AG04450 (cell line): ENCODE measurements at regions of chr3 and their contacts with region 1.

Region 1: GRCh38 chr3:97719156-97719821 is 45.3 kb upstream of the ARL6 start:
- DNase-seq: peak; percentile 34
- H3K4me3 ChIP-seq: no peak overlapping the region; the same call in 1 of the 2 replicates
- H3K27ac ChIP-seq: no peak overlapping the region
- H3K27me3 ChIP-seq: no peaks in the 10 kb centered on the region
- CTCF ChIP-seq: peak; percentile 98

Region 2: GRCh38 chr3:97647441-97647982 is 71.8 kb before region 1 on chr3:
- CTCF ChIA-PET with region 1: no interaction called
- POLR2A ChIA-PET with region 1: no interaction called
- DNase-seq: no peak
- H3K4me3 ChIP-seq: no peak overlapping the region
- H3K27ac ChIP-seq: no peak overlapping the region
- H3K27me3 ChIP-seq: no peaks in the 10 kb centered on the region
- CTCF ChIP-seq: no peak

Region 3: GRCh38 chr3:97662762-97663161 is 56.5 kb before region 1 on chr3:
- CTCF ChIA-PET with region 1: no interaction called
- POLR2A ChIA-PET with region 1: no interaction called
- DNase-seq: no peak
- H3K4me3 ChIP-seq: no peak overlapping the region
- H3K27ac ChIP-seq: no peak overlapping the region
- H3K27me3 ChIP-seq: no peaks in the 10 kb centered on the region
- CTCF ChIP-seq: no peak

Region 4: DNA sequence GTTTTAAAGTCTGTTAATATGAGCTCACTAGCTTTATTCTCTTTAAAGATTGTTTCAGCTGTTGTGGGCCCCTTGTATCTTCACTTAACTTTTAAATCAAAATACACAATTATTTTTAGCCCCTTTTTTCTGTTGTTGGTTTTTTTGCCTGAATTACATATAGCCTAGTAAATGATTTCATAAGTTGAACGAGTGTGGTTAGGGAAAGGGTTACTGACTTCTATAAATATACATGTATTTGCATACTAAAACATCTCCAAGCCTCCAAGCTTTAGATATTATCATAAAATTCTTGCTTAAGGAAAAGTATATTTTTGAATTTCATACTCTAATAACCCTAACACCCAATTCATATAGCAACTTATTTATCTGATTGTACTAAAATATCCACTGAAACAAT is 27.9 kb before region 1 on chr3:
- CTCF ChIA-PET with region 1: interaction called, 12 read pairs
- POLR2A ChIA-PET with region 1: no interaction called
- DNase-seq: no peak
- H3K4me3 ChIP-seq: no peak overlapping the region
- H3K27ac ChIP-seq: no peak overlapping the region
- H3K27me3 ChIP-seq: no peaks in the 10 kb centered on the region
- CTCF ChIP-seq: no peak

Region 5: DNA sequence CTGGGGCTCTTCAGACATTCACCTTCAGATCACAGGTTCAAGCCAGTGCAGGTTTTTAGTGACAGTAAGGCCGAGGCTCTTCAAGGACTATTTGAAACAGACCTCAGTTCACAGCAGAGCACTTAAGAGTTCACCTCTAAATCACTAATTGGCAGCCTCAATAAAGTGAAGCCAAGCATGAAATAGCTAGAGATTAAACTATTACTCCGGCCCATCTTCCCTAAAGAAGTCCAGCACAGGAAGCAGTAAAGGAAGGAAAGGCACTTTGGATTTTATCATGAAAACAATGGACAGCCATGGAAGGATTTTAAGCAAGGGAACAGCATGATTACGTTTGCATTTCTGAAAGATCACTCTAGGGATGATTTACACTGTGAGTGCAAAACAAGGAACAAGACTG is 17.6 kb after region 1 on chr3:
- CTCF ChIA-PET with region 1: interaction called, 21 read pairs
- POLR2A ChIA-PET with region 1: no interaction called
- DNase-seq: no peak
- H3K4me3 ChIP-seq: no peak overlapping the region
- H3K27ac ChIP-seq: no peak overlapping the region
- H3K27me3 ChIP-seq: no peaks in the 10 kb centered on the region
- CTCF ChIP-seq: no peak

Region 6: DNA sequence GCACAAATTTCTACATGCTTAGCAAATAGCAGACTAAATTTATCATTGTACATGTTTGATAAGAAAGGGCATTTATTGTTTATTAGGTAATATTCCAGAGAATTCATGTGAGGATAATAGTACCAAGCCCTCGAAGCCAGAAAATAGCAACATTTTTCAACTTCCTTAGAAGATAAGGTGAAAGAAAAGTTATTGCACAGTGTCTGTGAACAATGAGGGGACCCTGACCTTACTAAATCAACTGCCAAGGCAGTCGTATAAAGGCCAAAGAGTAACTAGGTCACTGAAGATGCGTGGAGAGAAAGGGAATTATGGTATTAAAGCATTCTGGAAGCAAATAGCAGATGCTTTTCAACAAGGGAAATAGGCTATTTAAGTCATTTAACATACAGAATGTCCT is 25.0 kb after region 1 on chr3:
- CTCF ChIA-PET with region 1: interaction called, 10 read pairs
- POLR2A ChIA-PET with region 1: no interaction called
- DNase-seq: no peak
- H3K4me3 ChIP-seq: no peak overlapping the region
- H3K27ac ChIP-seq: no peak overlapping the region
- H3K27me3 ChIP-seq: no peaks in the 10 kb centered on the region
- CTCF ChIP-seq: no peak